Esophagus muscularis mucosa (tissue), 4 donors: ENCODE measurements at regions of chr3 and their contacts with region 1.

Region 1: GRCh38 chr3:58332575-58333188 is at the start of gene PXK:
- DNase-seq: no peak
- H3K4me3 ChIP-seq: peak within 1 kb of the TSS; percentile 89 to 95 (median 95)
- H3K27ac ChIP-seq: peak within 1 kb of the TSS; percentile 79 to 82 (median 80)
- H3K4me1 ChIP-seq: peaks cover 17 to 52% (median 44%) of the 10 kb centered on the region in 4 donors
- H3K27me3 ChIP-seq: no peaks in the 10 kb centered on the region
- CTCF ChIP-seq: peak in 2 of 3 experiments; percentile 16 to 46
- EP300 ChIP-seq: no peak
- POLR2A ChIP-seq: no peak
- total RNA-seq, gene PXK: 28.2 to 35.3 (median 30.3) TPM

Region 2: GRCh38 chr3:58414538-58415197 is 82.0 kb after region 1 on chr3:
- intact Hi-C with region 1: loop called (anchors 5 kb)
- DNase-seq: no peak
- H3K4me3 ChIP-seq: no peak overlapping the region
- H3K27ac ChIP-seq: peak overlapping the region in 1 of 4 donors; percentile 51
- H3K4me1 ChIP-seq: peaks cover 17 to 21% (median 20%) of the 10 kb centered on the region in 4 donors
- H3K27me3 ChIP-seq: no peaks in the 10 kb centered on the region
- CTCF ChIP-seq: peak; percentile 81 to 85 (median 83)
- EP300 ChIP-seq: no peak
- POLR2A ChIP-seq: no peak